ENCODE measurements at regions of chr3 and their contacts with region 1.

Region 1: DNA sequence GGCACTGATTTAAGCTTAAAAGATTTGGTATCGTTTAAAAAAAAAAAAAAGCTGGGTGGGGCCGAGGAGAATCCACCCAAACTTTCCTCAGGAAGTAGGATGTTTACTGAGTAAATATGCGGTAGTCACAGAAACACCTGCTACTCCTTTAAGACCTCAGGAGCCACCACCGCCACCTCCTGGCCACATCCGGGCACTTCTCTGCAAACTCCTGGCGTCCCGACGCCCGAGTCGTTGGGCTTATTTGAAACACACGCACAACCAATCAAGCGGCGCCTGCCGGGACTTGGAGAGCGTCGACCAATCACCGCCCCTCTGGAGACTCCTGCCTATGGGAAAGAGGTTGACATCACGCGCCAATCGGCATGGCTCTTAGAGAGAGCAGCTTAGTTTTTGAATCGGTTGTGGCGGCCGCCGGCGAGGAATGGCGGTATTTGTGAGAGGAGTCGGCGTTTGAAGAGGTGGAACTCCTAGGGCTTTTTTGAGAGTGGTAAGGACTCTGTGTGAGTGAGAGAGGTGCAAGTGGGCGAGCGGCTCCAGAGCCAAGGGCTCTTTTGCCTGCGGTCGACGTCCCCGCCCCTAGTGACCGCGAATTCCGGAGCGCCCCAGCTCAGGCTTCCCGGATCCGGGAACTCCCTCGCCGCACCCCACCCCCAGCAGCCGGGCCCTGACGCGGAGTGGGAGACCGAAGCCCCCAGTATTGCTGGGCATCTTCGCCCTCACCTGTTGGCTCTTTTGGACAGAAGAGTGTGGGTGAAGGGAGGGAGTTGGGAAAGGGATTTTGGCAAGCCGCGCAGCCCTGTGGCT is at the start of gene ECT2:
- DNase-seq: peak; percentile 100
- H3K4me3 ChIP-seq: peak within 1 kb of the TSS; percentile 81
- H3K27ac ChIP-seq: peak within 1 kb of the TSS; percentile 98
- H3K4me1 ChIP-seq: peaks cover 74% of the 10 kb centered on the region
- H3K27me3 ChIP-seq: no peaks in the 10 kb centered on the region
- CTCF ChIP-seq: peak; percentile 91
- total RNA-seq, gene ECT2: 128 and 145 TPM in 2 replicates

Region 2: DNA sequence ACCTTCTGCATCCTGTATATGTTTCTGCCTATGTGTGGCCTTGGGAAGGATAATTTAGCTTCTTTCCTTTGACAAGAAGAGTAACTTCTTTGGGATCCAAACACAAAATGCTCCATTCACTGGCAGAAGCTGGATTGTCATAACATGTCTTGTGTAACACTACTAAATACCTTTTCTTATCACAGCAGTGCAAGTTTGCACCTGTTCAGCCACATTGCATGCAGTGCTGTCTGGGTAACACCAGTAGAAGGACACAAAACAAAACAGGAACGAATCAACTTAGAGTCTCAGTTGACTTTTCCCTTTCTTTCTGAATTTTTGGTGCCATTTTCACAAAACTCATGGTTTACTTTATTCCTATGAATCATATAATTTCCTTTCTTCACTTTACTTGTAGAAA is 1246.8 kb before region 1 on chr3:
- CTCF ChIA-PET with region 1: no interaction called
- POLR2A ChIA-PET with region 1: interaction called, 20 read pairs
- intact Hi-C with region 1: no loop called
- DNase-seq: no peak
- H3K4me3 ChIP-seq: no peak overlapping the region
- H3K27ac ChIP-seq: no peak overlapping the region
- H3K4me1 ChIP-seq: no peaks in the 10 kb centered on the region
- H3K27me3 ChIP-seq: no peaks in the 10 kb centered on the region
- CTCF ChIP-seq: no peak

Region 3: GRCh38 chr3:172355839-172356238 is 394.7 kb before region 1 on chr3:
- CTCF ChIA-PET with region 1: no interaction called
- POLR2A ChIA-PET with region 1: no interaction called
- intact Hi-C with region 1: loop called (anchors 5 kb)
- DNase-seq: peak; percentile 25 to 80
- H3K4me3 ChIP-seq: no peak overlapping the region
- H3K27ac ChIP-seq: peak overlapping the region; percentile 36; the same call in 1 of the 2 replicates
- H3K4me1 ChIP-seq: peaks cover 20% of the 10 kb centered on the region
- H3K27me3 ChIP-seq: no peaks in the 10 kb centered on the region
- CTCF ChIP-seq: no peak

Region 4: DNA sequence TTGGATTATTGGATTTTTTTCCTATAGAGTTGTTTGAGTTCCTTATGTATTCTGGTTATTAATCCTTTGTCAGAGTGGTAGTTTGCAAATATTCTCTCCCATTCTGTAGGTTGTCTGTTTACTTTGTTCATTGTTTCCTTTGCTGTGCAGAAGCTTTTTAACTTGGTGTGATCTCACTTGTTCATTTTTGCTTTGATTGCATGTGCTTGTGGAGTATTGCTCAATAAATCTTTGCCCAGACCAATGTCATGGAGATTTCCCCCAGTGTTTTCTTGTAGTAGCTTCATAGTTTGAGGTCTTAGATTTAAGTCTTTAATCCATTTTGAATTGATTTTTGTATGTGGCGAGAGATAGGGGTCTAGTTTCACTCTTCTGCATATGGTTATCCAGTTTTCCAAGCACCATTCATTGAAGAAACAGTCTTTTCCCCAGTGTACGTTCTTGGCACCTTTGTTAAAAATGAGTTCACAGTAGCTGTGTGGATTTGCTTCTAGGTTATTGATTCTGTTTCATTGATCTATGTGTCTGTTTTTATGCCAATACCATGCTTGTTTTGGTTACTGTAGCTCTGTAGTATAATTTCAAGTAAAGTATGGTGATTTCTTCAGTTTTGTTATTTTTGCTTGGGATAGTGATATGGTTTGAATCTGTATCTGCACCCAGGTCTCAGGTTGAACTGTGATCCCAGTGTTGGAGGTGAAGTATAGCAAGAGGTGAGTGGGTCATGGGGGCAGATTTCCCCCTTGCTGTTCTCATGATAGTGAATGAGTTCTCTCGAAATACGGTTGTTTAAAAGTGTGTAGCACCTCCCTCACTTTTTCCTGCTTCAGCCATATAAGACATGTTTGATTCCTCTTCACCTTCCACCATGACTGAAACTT is 181.2 kb before region 1 on chr3:
- CTCF ChIA-PET with region 1: no interaction called
- POLR2A ChIA-PET with region 1: no interaction called
- intact Hi-C with region 1: no loop called
- DNase-seq: no peak
- H3K4me3 ChIP-seq: no peak overlapping the region
- H3K27ac ChIP-seq: no peak overlapping the region
- H3K4me1 ChIP-seq: peaks cover 10% of the 10 kb centered on the region
- H3K27me3 ChIP-seq: no peaks in the 10 kb centered on the region
- CTCF ChIP-seq: no peak

Region 5: DNA sequence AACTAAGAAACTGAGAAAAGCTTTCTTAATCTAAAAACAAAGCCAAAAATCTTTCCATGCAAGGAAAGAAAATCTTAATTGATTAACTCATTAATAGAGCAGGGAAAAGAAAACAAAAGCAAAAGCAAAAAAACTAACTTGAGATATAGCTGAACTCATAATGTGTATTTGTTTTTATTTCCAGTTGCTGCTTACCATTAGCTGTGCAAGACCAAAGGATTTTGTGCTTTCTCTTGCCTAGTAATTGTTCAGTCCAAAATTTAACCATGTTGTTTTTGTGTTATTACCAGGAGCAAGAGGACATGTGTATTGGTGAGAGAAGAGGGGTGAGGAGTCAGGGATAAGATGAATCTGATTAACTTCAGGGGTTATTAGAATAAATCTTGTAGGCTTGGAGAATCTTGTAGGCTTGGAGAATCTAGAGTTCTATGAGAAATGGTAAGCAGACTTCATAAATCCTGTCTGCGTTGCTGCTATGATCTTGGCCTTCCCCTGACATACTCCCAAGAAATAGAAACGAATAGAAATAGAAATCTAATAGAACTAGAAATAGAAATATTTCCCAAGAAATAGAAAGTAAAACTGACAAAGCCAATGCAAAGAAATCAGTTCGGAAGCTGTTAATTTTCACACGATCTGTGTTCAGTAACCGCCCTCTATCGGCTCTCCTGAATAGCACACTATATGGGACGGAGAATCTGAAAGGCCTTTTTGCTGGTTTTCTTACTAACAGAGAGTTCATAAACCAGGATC is 154.8 kb before region 1 on chr3:
- CTCF ChIA-PET with region 1: interaction called, 7 read pairs
- POLR2A ChIA-PET with region 1: no interaction called
- intact Hi-C with region 1: loop called (anchors 1 kb)
- DNase-seq: peak; percentile 32 to 65
- H3K4me3 ChIP-seq: peak overlapping the region; percentile 25; the same call in 1 of the 2 replicates
- H3K27ac ChIP-seq: no peak overlapping the region
- H3K4me1 ChIP-seq: peaks cover 8% of the 10 kb centered on the region; the same call in 1 of the 2 replicates
- H3K27me3 ChIP-seq: no peaks in the 10 kb centered on the region
- CTCF ChIP-seq: peak; percentile 96

Region 6: GRCh38 chr3:172635588-172635987 is 115.0 kb before region 1 on chr3:
- CTCF ChIA-PET with region 1: interaction called, 4 read pairs
- POLR2A ChIA-PET with region 1: interaction called, 5 read pairs
- intact Hi-C with region 1: loop called (anchors 1 kb)
- DNase-seq: peak; percentile 71 to 86
- H3K4me3 ChIP-seq: no peak overlapping the region
- H3K27ac ChIP-seq: peak overlapping the region; percentile 54
- H3K4me1 ChIP-seq: peaks cover 37% of the 10 kb centered on the region
- H3K27me3 ChIP-seq: no peaks in the 10 kb centered on the region
- CTCF ChIP-seq: no peak

Region 7: GRCh38 chr3:172697558-172697957 is 53.0 kb before region 1 on chr3:
- CTCF ChIA-PET with region 1: no interaction called
- POLR2A ChIA-PET with region 1: no interaction called
- intact Hi-C with region 1: no loop called
- DNase-seq: no peak
- H3K4me3 ChIP-seq: no peak overlapping the region
- H3K27ac ChIP-seq: no peak overlapping the region
- H3K4me1 ChIP-seq: peaks cover 11% of the 10 kb centered on the region; the same call in 1 of the 2 replicates
- H3K27me3 ChIP-seq: no peaks in the 10 kb centered on the region
- CTCF ChIP-seq: no peak

Region 8: DNA sequence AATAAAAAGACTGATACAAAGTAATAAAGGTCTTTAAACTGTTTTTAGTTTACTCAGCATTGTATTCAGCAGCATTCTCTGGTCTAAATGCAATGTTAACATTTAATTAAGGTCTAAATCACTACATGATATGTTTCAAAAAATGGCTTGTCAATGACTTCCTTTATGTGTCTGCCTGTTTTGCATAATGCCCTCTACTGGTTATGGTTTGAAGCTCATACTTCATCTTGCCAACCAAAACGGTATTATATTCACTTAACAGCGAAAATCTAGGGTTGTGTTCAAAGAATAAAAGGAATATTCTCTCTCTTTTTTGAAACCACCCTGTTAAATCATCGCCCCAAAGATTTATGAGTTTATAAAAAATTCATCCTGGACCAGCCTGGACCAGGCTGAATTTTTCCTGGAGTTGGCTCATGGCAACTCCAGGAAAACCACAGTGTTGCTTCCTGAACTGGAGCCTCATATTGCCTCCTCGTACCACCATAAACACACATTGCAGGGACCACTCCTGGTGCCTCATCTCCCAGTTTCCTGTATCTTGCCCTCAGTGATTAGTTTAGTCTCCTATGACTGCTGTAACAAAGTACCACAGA is 33.0 kb before region 1 on chr3:
- CTCF ChIA-PET with region 1: interaction called, 6 read pairs
- POLR2A ChIA-PET with region 1: interaction called, 9 read pairs
- intact Hi-C with region 1: loop called (anchors 1 kb)
- DNase-seq: no peak
- H3K4me3 ChIP-seq: no peak overlapping the region
- H3K27ac ChIP-seq: no peak overlapping the region
- H3K4me1 ChIP-seq: peaks cover 44% of the 10 kb centered on the region
- H3K27me3 ChIP-seq: no peaks in the 10 kb centered on the region
- CTCF ChIP-seq: peak; percentile 53; the same call in 1 of the 2 replicates

Region 9: DNA sequence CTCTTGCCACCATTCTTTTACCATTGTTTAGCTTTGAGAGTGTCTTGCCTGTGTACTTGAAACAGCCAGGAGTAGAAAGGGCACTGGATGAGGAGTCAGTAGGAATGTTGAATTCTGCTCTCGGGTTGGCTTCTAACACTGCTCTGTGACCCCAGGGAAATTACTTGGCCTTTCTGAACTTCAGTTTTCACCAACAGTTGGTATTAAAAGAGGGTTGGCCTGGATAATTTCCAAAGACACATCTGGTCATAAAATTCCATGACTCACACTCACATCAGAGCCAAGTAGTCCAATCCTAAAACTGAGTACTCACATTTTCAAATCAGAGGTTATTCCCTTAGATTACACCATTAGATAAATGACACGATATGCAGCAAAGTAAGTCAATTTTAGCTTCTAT is 141.6 kb after region 1 on chr3:
- CTCF ChIA-PET with region 1: no interaction called
- POLR2A ChIA-PET with region 1: interaction called, 10 read pairs
- intact Hi-C with region 1: no loop called
- DNase-seq: no peak
- H3K4me3 ChIP-seq: no peak overlapping the region
- H3K27ac ChIP-seq: no peak overlapping the region
- H3K4me1 ChIP-seq: no peaks in the 10 kb centered on the region
- H3K27me3 ChIP-seq: no peaks in the 10 kb centered on the region
- CTCF ChIP-seq: no peak